GM12878 (cell line): ENCODE measurements at regions of chr5 and their contacts with region 1.

Region 1: DNA sequence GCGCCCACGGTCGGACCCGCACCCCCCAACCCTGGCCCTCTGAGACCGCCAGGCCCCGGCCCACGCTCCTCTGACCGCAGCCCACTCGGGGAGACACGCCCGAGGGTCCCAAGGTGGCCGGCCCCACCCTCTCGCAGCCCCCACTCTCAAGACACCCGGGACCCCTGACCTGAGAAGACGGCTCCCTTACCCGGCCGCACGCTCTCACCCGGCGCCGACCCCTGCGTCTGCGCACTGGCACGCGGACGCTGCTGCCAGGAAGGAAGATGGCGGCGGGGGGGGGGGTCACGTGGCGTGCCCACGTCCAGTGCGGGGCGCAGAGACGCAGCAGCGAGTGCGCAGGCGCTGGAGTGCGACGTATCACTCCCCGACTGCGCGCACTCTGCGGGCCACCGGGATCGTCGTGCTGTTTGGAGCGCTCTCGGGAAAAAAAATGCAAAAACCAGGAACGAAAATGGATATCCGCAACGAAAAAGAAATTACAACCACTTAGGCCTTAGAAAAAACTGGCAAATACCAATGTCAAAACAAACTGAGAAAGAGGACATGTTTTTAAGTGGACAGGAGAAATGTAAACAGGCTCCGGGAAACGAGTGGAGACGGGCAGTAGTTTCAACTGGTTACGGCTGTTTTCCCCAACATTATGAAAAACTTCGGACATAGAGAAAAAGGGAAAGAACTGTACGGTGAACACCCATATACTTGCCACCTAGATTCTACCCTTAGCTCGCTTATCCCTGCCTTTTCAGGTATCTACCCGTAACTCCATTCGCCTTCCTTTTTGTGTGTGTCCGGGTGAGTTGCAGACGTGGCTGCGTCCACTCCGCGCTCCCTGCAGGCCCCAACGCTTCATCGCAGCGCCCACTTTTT is at the start of gene MRPL36:
- DNase-seq: no peak
- ATAC-seq: peak; percentile 82
- H3K4me3 ChIP-seq: peak within 1 kb of the TSS; percentile 92
- H3K27ac ChIP-seq: peak within 1 kb of the TSS; percentile 79
- H3K4me1 ChIP-seq: peaks cover 8% of the 10 kb centered on the region
- H3K27me3 ChIP-seq: no peaks in the 10 kb centered on the region
- CTCF ChIP-seq: 0 out of 6 replicates have a peak, but pooled peaks of 1 of the 3 experiments have one; percentile 5
- EP300 ChIP-seq: no peak
- POLR2A ChIP-seq: peak; percentile 88
- RAD21 ChIP-seq: no peak
- polyA plus RNA-seq, gene MRPL36: 510 to 559 TPM

Region 2: DNA sequence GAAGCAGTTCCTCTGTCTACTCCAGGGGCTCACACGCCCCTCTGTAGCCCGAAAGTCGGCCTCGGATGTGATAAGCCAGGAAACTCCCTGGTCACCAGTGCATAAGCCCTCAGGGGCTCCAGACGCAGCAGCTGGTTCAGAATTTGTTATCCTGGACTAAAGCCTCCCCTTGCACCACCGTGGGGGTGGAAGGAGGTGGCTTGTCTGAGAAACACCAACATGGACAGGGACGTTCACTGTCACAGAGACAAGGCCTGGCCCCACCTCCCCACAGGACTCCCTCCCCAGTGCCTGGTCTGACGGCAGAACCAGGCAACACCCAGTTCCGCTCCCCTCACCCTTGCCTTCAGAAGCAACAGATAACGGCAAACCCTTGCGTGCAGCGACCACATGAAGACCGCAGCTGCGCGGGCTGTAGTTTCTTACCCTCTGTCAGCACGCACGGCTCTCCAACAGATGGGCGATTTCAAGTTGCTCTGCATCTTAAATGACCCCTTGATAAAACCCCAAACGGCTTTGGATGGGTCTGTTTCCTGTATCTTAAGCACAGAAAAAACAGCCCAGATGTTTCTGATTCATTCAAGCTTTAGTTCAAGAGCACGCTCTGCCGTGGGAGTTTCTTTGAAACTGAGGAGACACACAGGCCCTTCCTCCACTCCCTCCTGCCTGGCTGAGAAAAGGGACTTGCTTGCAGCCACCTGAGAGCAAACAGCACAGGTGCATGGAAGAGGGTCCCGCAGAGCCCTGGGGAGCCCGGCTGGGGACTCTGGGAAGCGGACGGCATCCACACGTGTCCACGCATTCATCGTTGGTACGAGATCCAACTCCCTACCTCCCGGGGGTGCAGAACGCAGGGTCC is 835.9 kb before region 1 on chr5:
- CTCF ChIA-PET with region 1: no interaction called
- POLR2A ChIA-PET with region 1: no interaction called
- RAD21 ChIA-PET with region 1: no interaction called
- SMC1A ChIA-PET with region 1: no interaction called
- in situ Hi-C with region 1: no loop called
- intact Hi-C with region 1: no loop called
- DNase-seq: no peak
- ATAC-seq: no peak
- H3K4me3 ChIP-seq: no peak overlapping the region
- H3K27ac ChIP-seq: peak overlapping the region; percentile 59
- H3K4me1 ChIP-seq: peaks cover 17% of the 10 kb centered on the region
- H3K27me3 ChIP-seq: peaks cover 0 to 5% of the 10 kb centered on the region in 2 experiments; a peak in 2 of 4 replicates
- CTCF ChIP-seq: no peak
- EP300 ChIP-seq: no peak
- POLR2A ChIP-seq: peak; percentile 63; the same call in 1 of the 2 replicates
- RAD21 ChIP-seq: no peak

Region 3: DNA sequence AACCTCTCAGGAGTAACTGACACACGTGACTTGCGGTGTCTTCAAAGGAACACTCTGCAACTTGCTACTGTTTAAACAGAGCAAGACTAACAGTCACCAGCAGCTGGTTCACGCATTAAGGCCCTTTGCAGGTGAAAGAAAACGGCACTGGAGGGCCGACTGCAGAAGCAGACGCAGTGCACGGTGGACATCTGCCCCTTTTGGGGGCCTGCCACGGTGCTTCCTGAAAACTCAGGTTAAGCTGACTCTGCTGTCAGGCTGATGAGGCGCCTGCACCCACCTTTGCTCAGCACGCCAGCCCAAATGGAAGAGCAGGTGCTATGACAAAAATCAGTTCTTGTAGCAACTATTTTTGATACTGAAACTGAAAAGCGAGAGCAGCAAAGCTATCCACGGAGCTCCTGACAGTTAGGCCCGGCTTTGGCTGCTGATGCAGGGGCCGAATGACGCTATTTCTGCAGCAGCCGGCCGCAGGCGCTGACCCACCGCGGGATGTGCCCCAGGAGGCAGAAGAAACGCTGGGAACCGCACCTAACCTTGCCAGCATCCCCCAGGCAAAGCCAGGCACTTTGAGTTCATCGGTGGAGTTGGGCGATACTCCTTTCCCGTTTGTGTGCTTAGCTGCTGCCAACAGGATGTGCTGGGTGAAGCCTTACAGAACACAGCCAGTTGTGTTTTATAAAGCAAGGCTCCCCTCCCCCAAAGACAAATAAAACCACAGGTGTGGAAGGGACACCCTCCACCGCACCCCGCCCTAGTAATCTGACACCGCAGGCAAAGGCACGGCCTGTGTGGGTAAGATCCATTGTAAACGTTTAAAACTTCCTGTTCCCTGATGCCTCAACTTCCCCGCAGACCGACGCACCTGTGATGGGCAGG is 483.9 kb before region 1 on chr5:
- CTCF ChIA-PET with region 1: no interaction called
- POLR2A ChIA-PET with region 1: no interaction called
- RAD21 ChIA-PET with region 1: no interaction called
- SMC1A ChIA-PET with region 1: no interaction called
- in situ Hi-C with region 1: no loop called
- intact Hi-C with region 1: loop called (anchors 10 kb)
- DNase-seq: peak; percentile 69
- ATAC-seq: peak; percentile 66
- H3K4me3 ChIP-seq: peak overlapping the region; percentile 40; the same call in 1 of the 2 replicates
- H3K27ac ChIP-seq: peak overlapping the region; percentile 79
- H3K4me1 ChIP-seq: peaks cover 50% of the 10 kb centered on the region
- H3K27me3 ChIP-seq: no peaks in the 10 kb centered on the region
- CTCF ChIP-seq: no peak
- EP300 ChIP-seq: peak; percentile 68 to 97; a peak in 3 of 4 replicates
- POLR2A ChIP-seq: peak; percentile 71; the same call in 1 of the 2 replicates
- RAD21 ChIP-seq: 0 out of 2 replicates have a peak, but pooled peaks have one; percentile 12

Region 4: DNA sequence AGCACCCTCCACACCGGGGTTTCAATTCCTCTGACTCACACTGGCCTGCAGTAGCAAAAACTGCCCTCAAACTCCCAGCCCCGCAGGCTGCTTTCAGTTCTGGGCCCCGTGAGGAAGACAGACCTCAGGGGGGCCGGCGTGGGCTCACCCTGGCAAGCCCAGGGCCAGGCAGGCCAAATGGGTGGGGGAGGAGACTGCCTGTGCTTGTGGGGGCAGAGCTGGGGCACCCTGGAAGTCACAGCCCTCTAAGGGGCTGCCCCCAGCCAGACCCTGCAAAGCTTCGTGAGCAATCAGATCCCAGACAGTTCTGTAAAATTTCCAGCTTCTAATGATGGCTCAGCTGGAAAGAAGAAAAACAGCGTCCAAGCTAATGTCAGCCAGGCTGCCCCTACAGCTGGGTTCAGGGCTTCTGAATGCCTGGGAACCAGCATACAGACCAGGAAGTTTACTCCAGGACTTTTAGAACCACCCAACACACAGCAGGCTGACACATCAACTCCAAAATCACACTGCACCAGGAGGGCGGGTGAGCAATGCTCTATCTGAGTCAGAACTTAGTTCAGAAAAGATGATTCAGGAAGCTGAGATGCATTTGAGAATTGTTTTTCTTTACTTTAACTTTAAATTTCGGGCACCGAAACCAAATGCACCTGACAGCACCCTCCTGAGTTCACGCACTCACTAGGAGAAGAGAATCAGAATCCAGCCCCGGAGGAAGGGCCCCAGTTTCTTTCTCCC is 310.7 kb before region 1 on chr5:
- CTCF ChIA-PET with region 1: no interaction called
- POLR2A ChIA-PET with region 1: no interaction called
- RAD21 ChIA-PET with region 1: no interaction called
- SMC1A ChIA-PET with region 1: no interaction called
- in situ Hi-C with region 1: loop called (anchors 5 kb)
- intact Hi-C with region 1: no loop called
- DNase-seq: peak; percentile 77
- ATAC-seq: peak; percentile 57
- H3K4me3 ChIP-seq: peak overlapping the region; percentile 75
- H3K27ac ChIP-seq: peak overlapping the region; percentile 98
- H3K4me1 ChIP-seq: peaks cover 84% of the 10 kb centered on the region
- H3K27me3 ChIP-seq: no peaks in the 10 kb centered on the region
- CTCF ChIP-seq: no peak
- EP300 ChIP-seq: peak; percentile 19 to 21; a peak in 1 of 4 replicates
- POLR2A ChIP-seq: peak; percentile 25
- RAD21 ChIP-seq: 0 out of 2 replicates have a peak, but pooled peaks have one; percentile 1

Region 5: DNA sequence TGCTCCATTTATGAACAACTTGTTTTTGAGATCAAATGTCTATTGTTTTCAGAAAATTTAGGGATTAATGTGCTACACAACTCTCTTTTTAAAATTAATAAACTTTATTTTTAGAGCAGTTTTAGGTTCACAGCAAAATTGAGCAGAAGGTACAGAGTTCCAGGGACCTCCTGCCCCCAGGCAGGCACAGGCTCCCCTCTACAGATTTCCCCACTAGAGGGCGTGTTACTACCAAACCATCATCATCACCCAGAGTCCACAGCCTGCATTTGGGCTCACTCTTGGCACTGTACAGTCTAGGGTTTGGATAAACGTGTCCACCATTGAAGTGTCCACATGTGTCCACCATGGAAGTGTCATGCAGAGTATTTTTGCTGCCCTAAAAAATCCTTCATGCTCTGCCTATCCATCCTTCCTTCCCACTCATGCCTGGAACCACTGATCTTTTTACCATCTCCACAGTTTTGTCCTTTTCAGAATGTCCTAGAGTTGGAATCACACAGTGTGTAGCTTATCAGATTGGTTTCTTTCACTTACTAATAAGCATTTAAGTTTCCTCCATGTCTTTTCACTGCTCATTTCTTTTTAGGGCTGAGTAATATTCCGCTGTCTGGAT is 61.9 kb before region 1 on chr5:
- CTCF ChIA-PET with region 1: interaction called, 21 read pairs
- POLR2A ChIA-PET with region 1: no interaction called
- RAD21 ChIA-PET with region 1: interaction called, 6 read pairs
- SMC1A ChIA-PET with region 1: interaction called, 3 read pairs
- in situ Hi-C with region 1: no loop called
- intact Hi-C with region 1: loop called (anchors 10 kb)
- DNase-seq: peak; percentile 11
- ATAC-seq: peak; percentile 99
- H3K4me3 ChIP-seq: no peak overlapping the region
- H3K27ac ChIP-seq: no peak overlapping the region
- H3K4me1 ChIP-seq: no peaks in the 10 kb centered on the region
- H3K27me3 ChIP-seq: peaks cover 0 to 2% of the 10 kb centered on the region in 2 experiments; a peak in 1 of 4 replicates
- CTCF ChIP-seq: peak; percentile 64 to 77 (median 77); a peak in 5 of 6 replicates
- EP300 ChIP-seq: no peak
- POLR2A ChIP-seq: no peak
- RAD21 ChIP-seq: peak; percentile 71

Region 6: DNA sequence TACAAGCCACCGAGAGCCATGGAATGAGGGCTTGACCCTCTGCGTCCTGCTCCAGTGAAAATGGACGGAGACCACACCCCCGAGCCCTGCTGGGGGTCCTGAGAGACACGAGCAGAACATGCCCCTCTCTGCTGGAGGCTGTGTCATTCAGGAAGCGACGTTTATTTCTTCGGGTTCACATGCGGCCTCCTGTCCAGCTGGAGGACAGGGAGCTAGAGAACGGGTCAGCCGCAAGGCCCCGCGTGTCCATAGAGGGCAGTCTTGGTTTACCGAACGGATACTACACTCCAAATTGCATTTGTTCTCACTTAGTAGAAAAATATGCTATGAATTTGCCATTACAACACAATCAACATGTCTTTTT is 36.3 kb before region 1 on chr5:
- CTCF ChIA-PET with region 1: interaction called, 20 read pairs
- POLR2A ChIA-PET with region 1: interaction called, 4 read pairs
- RAD21 ChIA-PET with region 1: interaction called, 12 read pairs
- SMC1A ChIA-PET with region 1: interaction called, 7 read pairs
- in situ Hi-C with region 1: no loop called
- intact Hi-C with region 1: loop called (anchors 5 kb)
- DNase-seq: no peak
- ATAC-seq: peak; percentile 91
- H3K4me3 ChIP-seq: no peak overlapping the region
- H3K27ac ChIP-seq: no peak overlapping the region
- H3K4me1 ChIP-seq: no peaks in the 10 kb centered on the region
- H3K27me3 ChIP-seq: peaks cover 0 to 3% of the 10 kb centered on the region in 2 experiments; a peak in 2 of 4 replicates
- CTCF ChIP-seq: peak; percentile 69 to 81 (median 79)
- EP300 ChIP-seq: no peak
- POLR2A ChIP-seq: no peak
- RAD21 ChIP-seq: peak; percentile 77

Region 7: DNA sequence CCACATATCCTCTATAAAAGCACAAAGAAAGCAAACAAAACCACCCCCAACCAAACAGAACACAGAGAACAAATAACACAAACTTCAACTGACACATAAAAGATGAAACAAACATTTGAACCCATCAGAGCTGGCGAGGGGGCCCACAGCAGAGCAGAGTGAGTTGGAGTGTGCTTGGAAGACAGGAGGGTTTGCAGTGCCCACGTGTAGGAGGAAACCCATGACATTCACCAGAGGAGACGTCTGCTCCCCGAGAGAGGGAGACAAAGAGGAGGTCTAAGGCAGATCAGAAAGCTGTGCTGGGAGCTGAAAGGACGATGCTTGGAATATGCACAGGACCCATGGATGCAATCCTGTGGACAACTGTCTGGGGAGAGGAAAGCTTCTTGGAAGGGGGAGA is 27.2 kb before region 1 on chr5:
- CTCF ChIA-PET with region 1: interaction called, 18 read pairs
- POLR2A ChIA-PET with region 1: interaction called, 6 read pairs
- RAD21 ChIA-PET with region 1: interaction called, 5 read pairs
- SMC1A ChIA-PET with region 1: interaction called, 6 read pairs
- in situ Hi-C with region 1: no loop called
- intact Hi-C with region 1: no loop called
- DNase-seq: no peak
- ATAC-seq: 0 out of 3 replicates have a peak, but pooled peaks have one; percentile 24
- H3K4me3 ChIP-seq: no peak overlapping the region
- H3K27ac ChIP-seq: no peak overlapping the region
- H3K4me1 ChIP-seq: no peaks in the 10 kb centered on the region; the same call in 1 of the 2 replicates
- H3K27me3 ChIP-seq: no peaks in the 10 kb centered on the region
- CTCF ChIP-seq: peak; percentile 8 to 25 (median 10); a peak in 2 of 6 replicates
- EP300 ChIP-seq: no peak
- POLR2A ChIP-seq: no peak
- RAD21 ChIP-seq: peak; percentile 53

Region 8: DNA sequence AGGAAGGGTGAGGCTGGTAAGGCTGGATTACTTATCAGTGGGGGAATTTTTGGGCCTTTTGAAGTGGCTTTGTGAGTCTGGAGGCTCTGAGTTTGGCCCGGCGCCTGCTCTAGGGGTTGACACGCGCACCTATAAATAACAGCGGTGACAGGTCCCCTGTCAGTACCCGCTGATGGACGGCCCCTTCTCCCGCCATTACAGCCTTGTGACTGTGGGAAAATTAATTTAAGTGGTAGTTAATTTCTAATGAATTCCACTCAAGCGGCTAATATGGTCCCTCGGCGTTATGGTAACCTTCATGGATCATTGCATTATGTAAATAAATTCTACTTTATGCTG is 16.7 kb before region 1 on chr5:
- CTCF ChIA-PET with region 1: interaction called, 3 read pairs
- POLR2A ChIA-PET with region 1: interaction called, 7 read pairs
- RAD21 ChIA-PET with region 1: interaction called, 4 read pairs
- SMC1A ChIA-PET with region 1: interaction called, 9 read pairs
- in situ Hi-C with region 1: no loop called
- intact Hi-C with region 1: loop called (anchors 2 kb)
- DNase-seq: peak; percentile 63
- ATAC-seq: peak; percentile 87
- H3K4me3 ChIP-seq: peak overlapping the region; percentile 28; the same call in 1 of the 2 replicates
- H3K27ac ChIP-seq: peak overlapping the region; percentile 75
- H3K4me1 ChIP-seq: peaks cover 35% of the 10 kb centered on the region
- H3K27me3 ChIP-seq: no peaks in the 10 kb centered on the region
- CTCF ChIP-seq: no peak
- EP300 ChIP-seq: peak; percentile 71 to 93
- POLR2A ChIP-seq: no peak
- RAD21 ChIP-seq: no peak